Left cardiac atrium (tissue), 4 donors: ENCODE measurements at regions of chr2 and their contacts with region 1.

Region 1: DNA sequence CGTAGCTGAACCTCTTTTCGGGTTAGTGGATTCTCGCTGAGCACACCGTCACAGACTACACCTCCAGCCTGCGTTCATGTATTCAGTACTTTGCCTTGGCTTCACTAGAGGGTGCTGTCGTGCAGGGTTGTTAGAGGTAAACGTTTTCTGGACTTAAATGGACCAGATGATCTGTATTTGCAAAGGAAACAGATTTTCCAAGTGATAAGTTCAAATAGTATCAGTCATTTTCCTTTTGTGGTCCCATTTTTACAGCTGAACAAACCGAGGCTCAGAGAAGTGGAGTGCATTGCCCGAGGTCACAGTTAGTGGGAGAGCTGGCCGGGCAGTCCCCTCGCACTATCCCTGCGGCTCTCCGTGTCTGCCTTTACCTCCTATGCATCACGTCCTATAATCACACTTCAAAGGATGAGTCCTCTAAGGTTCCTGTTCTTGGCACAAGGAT is 125.9 kb downstream of the MAP4K4 start:
- DNase-seq: peak; percentile 52
- ATAC-seq: peak; percentile 48 to 52

Region 2: GRCh38 chr2:101736861-101737291 is 86.5 kb before region 1 on chr2:
- intact Hi-C with region 1: no loop called
- DNase-seq: no peak
- ATAC-seq: peak in 1 of 2 donors; percentile 70

Region 3: GRCh38 chr2:101770726-101771125 is 52.6 kb before region 1 on chr2:
- intact Hi-C with region 1: loop called in 1 of 2 experiments (anchors 10 kb)
- DNase-seq: no peak
- ATAC-seq: peak; percentile 22 to 24